CD4-positive, alpha-beta T cell (primary cell): ENCODE measurements at regions of chr13 and their contacts with region 1.

Region 1: GRCh38 chr13:112942689-112943308 is 26.2 kb upstream of the MCF2L start:
- DNase-seq: peak; percentile 89 to 99 (median 95)
- ATAC-seq: peak; percentile 97
- H3K4me3 ChIP-seq: peak overlapping the region; percentile 45
- H3K4me3 Mint-ChIP-seq: peak overlapping the region; percentile 90
- H3K27ac ChIP-seq: no peak overlapping the region
- H3K27ac Mint-ChIP-seq: no peak overlapping the region
- H3K4me1 ChIP-seq: peaks cover 16% of the 10 kb centered on the region
- H3K4me1 Mint-ChIP-seq: peaks cover 6% of the 10 kb centered on the region
- H3K27me3 ChIP-seq: peaks cover 7 to 11% of the 10 kb centered on the region in 2 experiments
- H3K27me3 Mint-ChIP-seq: peaks cover 52% of the 10 kb centered on the region
- CTCF ChIP-seq: peak; percentile 97

Region 2: DNA sequence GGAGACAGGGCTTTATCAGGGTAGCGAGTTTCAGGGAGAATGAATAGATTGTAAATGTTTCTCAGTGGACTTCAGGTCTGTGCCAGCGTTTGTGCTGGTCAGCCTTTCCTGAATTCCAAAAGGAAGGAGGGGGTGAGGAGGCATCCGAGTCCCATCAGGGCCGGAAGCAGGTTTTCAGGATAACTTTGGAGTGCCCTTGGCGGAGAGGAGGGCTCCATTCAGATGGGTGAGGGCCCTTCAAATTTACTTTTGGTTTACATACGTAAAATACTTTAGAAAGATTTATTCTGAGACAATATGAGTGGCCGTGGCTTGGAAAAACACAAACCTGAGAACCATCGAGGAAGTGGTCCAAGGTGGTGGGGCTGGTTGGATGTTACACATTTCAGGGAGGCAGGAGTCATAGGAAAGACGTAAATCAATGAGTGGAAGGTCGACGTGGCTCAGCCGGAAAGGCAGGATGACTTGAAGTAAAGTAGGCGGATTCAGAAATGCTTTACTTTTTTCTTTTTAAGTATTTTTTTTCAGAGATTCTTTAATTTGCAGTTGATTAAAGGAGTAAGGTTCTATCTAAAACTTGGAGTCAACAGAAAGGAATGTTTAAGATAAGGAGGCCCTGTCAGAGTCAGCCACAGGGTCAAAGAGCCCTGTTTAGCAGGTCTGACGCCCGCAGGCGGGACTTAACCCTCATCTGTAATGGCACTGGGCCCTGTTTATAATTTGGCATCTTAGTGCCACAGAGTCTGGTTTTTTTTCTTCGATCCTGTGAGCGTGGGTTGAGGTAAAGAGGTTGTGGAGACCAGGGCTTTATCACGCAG is 220.2 kb before region 1 on chr13:
- CTCF ChIA-PET with region 1: no interaction called
- POLR2A ChIA-PET with region 1: no interaction called
- intact Hi-C with region 1: no loop called
- DNase-seq: no peak
- ATAC-seq: no peak
- H3K4me3 ChIP-seq: no peak overlapping the region
- H3K4me3 Mint-ChIP-seq: no peak overlapping the region
- H3K27ac ChIP-seq: no peak overlapping the region
- H3K27ac Mint-ChIP-seq: peak overlapping the region; percentile 8
- H3K4me1 ChIP-seq: peaks cover 28% of the 10 kb centered on the region
- H3K4me1 Mint-ChIP-seq: peaks cover 55% of the 10 kb centered on the region
- H3K27me3 ChIP-seq: no peaks in the 10 kb centered on the region
- H3K27me3 Mint-ChIP-seq: no peaks in the 10 kb centered on the region
- CTCF ChIP-seq: no peak

Region 3: GRCh38 chr13:112976526-112976925 is 33.7 kb after region 1 on chr13:
- CTCF ChIA-PET with region 1: no interaction called
- POLR2A ChIA-PET with region 1: no interaction called
- intact Hi-C with region 1: no loop called
- DNase-seq: no peak
- ATAC-seq: no peak
- H3K4me3 ChIP-seq: no peak overlapping the region
- H3K4me3 Mint-ChIP-seq: no peak overlapping the region
- H3K27ac ChIP-seq: no peak overlapping the region
- H3K27ac Mint-ChIP-seq: no peak overlapping the region
- H3K4me1 ChIP-seq: peaks cover under 1% of the 10 kb centered on the region
- H3K4me1 Mint-ChIP-seq: peaks cover 8% of the 10 kb centered on the region
- H3K27me3 ChIP-seq: no peaks in the 10 kb centered on the region
- H3K27me3 Mint-ChIP-seq: no peaks in the 10 kb centered on the region
- CTCF ChIP-seq: no peak

Region 4: GRCh38 chr13:113009743-113010509 is 67.1 kb after region 1 on chr13:
- CTCF ChIA-PET with region 1: no interaction called
- POLR2A ChIA-PET with region 1: no interaction called
- intact Hi-C with region 1: no loop called
- DNase-seq: no peak
- ATAC-seq: no peak
- H3K4me3 ChIP-seq: no peak overlapping the region
- H3K4me3 Mint-ChIP-seq: no peak overlapping the region
- H3K27ac ChIP-seq: no peak overlapping the region
- H3K27ac Mint-ChIP-seq: no peak overlapping the region
- H3K4me1 ChIP-seq: peaks cover 17% of the 10 kb centered on the region
- H3K4me1 Mint-ChIP-seq: peaks cover 9% of the 10 kb centered on the region
- H3K27me3 ChIP-seq: no peaks in the 10 kb centered on the region
- H3K27me3 Mint-ChIP-seq: no peaks in the 10 kb centered on the region
- CTCF ChIP-seq: no peak

Region 5: DNA sequence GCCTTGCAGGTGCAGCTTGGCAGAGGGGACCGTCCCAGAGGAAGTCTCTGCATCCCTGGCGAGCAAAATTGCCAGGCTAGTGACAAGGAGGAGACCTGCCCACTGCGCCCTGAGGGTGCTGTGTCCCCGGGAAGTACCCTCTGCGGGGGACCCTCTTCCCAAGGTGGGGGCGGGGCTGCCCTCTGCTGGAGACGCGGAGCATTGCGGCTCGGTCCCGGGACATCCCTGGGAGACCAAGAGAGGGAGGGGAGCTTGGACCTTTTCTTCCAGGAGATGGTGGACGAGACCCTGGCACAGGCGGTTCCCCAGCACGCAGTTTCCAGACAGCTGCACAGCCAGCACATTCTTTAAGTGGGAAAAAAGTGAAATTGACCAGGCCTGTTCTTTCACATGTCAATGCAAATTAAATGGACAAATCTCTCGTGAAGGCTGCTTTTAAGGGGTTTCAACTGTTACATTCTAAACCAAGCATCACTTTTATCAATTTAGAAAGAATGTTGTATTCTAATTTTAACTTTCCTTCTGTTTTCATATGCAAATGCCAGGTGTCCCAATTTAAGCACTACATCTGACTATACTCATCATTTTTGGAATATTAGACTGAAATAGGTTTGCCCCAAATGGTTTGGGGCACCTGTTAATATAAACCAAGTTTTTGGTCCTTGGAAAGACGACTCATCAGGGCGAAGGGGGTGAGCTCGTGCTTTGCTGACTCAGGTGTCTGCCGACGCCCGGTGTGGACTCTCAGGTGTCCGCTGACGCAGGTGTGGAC is 86.9 kb after region 1 on chr13:
- CTCF ChIA-PET with region 1: interaction called, 6 read pairs
- POLR2A ChIA-PET with region 1: no interaction called
- intact Hi-C with region 1: loop called (anchors 1 kb)
- DNase-seq: peak in 13 of 14 experiments; percentile 17 to 69 (median 45)
- ATAC-seq: no peak
- H3K4me3 ChIP-seq: no peak overlapping the region
- H3K4me3 Mint-ChIP-seq: no peak overlapping the region
- H3K27ac ChIP-seq: no peak overlapping the region
- H3K27ac Mint-ChIP-seq: no peak overlapping the region
- H3K4me1 ChIP-seq: peaks cover 4% of the 10 kb centered on the region
- H3K4me1 Mint-ChIP-seq: no peaks in the 10 kb centered on the region
- H3K27me3 ChIP-seq: no peaks in the 10 kb centered on the region
- H3K27me3 Mint-ChIP-seq: no peaks in the 10 kb centered on the region
- CTCF ChIP-seq: peak; percentile 94

Region 6: DNA sequence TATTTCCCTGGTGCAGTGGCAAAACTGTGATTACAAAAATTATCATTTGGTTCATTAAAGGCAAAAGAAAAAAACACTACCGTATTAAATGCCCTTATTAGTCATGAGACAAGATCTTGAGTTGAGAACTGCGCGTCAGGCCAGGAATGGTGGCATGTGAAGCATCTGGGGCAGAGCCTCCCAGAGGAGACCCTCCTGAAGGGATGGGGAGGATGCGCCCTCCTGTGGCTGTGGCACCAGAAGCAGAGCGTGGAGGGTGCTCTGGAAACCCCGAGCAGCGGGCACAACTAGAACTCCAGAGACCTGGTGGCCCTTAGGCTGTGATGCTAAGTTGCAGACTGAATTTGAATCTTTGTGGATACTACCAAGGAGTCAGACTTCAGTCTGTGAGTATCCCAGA is 278.1 kb after region 1 on chr13:
- CTCF ChIA-PET with region 1: no interaction called
- POLR2A ChIA-PET with region 1: no interaction called
- intact Hi-C with region 1: loop called in 1 of 2 experiments (anchors 5 kb)
- DNase-seq: peak in 11 of 14 experiments; percentile 3 to 57 (median 22)
- ATAC-seq: peak; percentile 54
- H3K4me3 ChIP-seq: no peak overlapping the region
- H3K4me3 Mint-ChIP-seq: no peak overlapping the region
- H3K27ac ChIP-seq: no peak overlapping the region
- H3K27ac Mint-ChIP-seq: no peak overlapping the region
- H3K4me1 ChIP-seq: peaks cover 11% of the 10 kb centered on the region
- H3K4me1 Mint-ChIP-seq: peaks cover 18% of the 10 kb centered on the region
- H3K27me3 ChIP-seq: no peaks in the 10 kb centered on the region
- H3K27me3 Mint-ChIP-seq: no peaks in the 10 kb centered on the region
- CTCF ChIP-seq: peak; percentile 10

Region 7: GRCh38 chr13:113393563-113394338 is 451.0 kb after region 1 on chr13:
- CTCF ChIA-PET with region 1: interaction called, 6 read pairs
- POLR2A ChIA-PET with region 1: no interaction called
- intact Hi-C with region 1: loop called (anchors 1 kb)
- DNase-seq: peak; percentile 63 to 92 (median 80)
- ATAC-seq: peak; percentile 96
- H3K4me3 ChIP-seq: peak overlapping the region; percentile 73
- H3K4me3 Mint-ChIP-seq: peak overlapping the region; percentile 89
- H3K27ac ChIP-seq: no peak overlapping the region
- H3K27ac Mint-ChIP-seq: no peak overlapping the region
- H3K4me1 ChIP-seq: peaks cover 11% of the 10 kb centered on the region
- H3K4me1 Mint-ChIP-seq: peaks cover 6% of the 10 kb centered on the region
- H3K27me3 ChIP-seq: no peaks in the 10 kb centered on the region
- H3K27me3 Mint-ChIP-seq: no peaks in the 10 kb centered on the region
- CTCF ChIP-seq: peak; percentile 73